ENCODE measurements at regions of chr2 and their contacts with region 1.

Region 1: DNA sequence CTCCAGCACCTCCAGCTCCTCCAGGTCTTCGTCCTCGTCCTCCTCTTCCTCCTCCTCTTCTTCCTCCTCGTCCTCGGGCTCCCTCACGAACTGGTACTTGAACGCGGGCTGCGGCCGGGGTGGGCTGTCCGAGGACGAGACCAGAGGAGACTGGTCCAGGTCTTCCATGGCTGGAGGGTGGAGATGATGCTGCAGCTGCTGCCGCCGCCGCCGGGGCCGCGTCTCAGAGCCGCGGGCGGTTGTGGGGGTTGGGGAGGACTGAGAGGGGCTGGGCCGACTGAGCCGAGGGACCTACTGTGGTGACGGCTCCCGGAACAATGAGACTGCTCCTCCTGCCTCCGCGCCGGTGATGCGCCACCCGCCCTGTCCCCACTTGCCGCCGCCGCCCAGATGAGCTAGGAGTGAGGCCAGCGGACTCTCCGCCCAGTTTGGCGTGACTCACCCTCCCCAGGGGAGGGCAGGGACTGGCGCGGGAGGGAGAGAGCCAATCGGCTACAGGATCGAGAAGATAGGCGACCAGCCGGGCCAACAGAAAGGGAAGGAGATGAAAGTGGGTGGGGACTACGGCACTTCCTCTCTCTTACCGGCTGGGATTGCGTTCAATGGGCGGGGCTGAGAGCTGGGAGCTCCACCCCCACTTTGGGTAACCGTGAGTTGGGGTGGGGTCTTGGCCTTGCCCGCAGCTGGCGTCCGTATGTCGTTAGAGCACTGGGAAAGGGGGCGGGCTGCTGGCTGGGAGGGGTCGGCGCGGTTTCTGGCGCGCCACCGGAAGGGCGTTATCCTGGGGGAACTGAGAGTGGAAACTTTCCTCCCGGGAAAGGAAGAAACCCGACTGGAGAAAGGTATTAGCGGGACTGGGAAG is at the start of gene RTN4:
- DNase-seq: peak; percentile 92 to 100 (median 95)
- ATAC-seq: peak; percentile 75
- H3K4me3 ChIP-seq: peak within 1 kb of the TSS; percentile 89
- H3K27ac ChIP-seq: peak within 1 kb of the TSS; percentile 96
- H3K4me1 ChIP-seq: peaks cover 7 to 12% of the 10 kb centered on the region in 2 experiments; a peak in 3 of 5 replicates
- H3K27me3 ChIP-seq: no peaks in the 10 kb centered on the region
- CTCF ChIP-seq: peak in 1 of 3 experiments; percentile 16; a peak in 2 of 6 replicates
- EP300 ChIP-seq: no peak
- POLR2A ChIP-seq: peak; percentile 95
- RAD21 ChIP-seq: peak in 1 of 2 experiments; percentile 14; a peak in 1 of 4 replicates
- polyA plus RNA-seq, gene RTN4: 75.8 to 90.3 TPM

Region 2: GRCh38 chr2:54455563-54456361 is 594.6 kb before region 1 on chr2 and contains the start of gene SPTBN1:
- CTCF ChIA-PET with region 1: no interaction called
- POLR2A ChIA-PET with region 1: no interaction called
- in situ Hi-C with region 1: no loop called
- intact Hi-C with region 1: no loop called
- DNase-seq: peak; percentile 17 to 61 (median 42)
- ATAC-seq: peak; percentile 72
- H3K4me3 ChIP-seq: peak within 1 kb of the TSS; percentile 19; the same call in 1 of the 2 replicates
- H3K27ac ChIP-seq: no peak within 1 kb of the TSS
- H3K4me1 ChIP-seq: peaks cover 0 to 21% of the 10 kb centered on the region in 2 experiments; a peak in 2 of 5 replicates
- H3K27me3 ChIP-seq: peaks cover 24 to 26% of the 10 kb centered on the region in 2 experiments; a peak in 4 of 5 replicates
- CTCF ChIP-seq: no peak
- EP300 ChIP-seq: no peak
- POLR2A ChIP-seq: no peak
- RAD21 ChIP-seq: no peak
- polyA plus RNA-seq, gene SPTBN1: 8.9 to 16.8 TPM

Region 3: DNA sequence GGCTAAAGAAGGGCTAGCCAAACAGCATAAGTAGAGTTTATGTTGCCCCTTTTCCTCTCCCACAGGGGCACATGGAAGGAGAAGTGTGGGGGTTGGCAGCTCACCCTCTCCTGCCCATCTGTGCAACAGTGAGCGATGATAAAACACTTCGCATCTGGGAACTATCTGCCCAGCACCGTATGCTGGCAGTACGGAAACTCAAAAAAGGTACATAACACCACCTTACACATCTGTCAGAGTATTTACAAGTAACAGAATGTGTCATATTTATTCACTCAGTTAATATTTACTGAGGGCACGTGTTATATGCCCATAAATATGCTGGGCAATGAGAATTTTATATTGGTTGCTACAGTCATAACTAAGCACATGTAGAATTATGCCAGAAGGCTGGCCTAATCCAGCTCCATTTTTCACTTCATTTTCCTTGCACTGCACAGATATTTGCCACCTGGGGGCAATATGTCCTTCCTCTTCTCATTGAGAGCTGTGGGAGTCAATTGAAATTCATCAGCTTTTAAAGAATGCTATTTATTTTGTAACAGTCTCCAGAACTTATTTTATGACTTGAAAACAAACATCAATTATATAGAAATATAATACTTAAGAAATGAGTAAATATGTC is 150.7 kb before region 1 on chr2:
- CTCF ChIA-PET with region 1: no interaction called
- POLR2A ChIA-PET with region 1: interaction called, 3 read pairs
- in situ Hi-C with region 1: no loop called
- intact Hi-C with region 1: loop called (anchors 2 kb)
- DNase-seq: peak in 2 of 4 experiments; percentile 38 to 63
- ATAC-seq: peak; percentile 87
- H3K4me3 ChIP-seq: no peak overlapping the region
- H3K27ac ChIP-seq: no peak overlapping the region
- H3K4me1 ChIP-seq: peaks cover 0 to 8% of the 10 kb centered on the region in 2 experiments; a peak in 3 of 5 replicates
- H3K27me3 ChIP-seq: peaks cover 0 to 16% of the 10 kb centered on the region in 2 experiments; a peak in 3 of 5 replicates
- CTCF ChIP-seq: peak; percentile 55 to 85 (median 68); a peak in 5 of 6 replicates
- EP300 ChIP-seq: no peak
- POLR2A ChIP-seq: no peak
- RAD21 ChIP-seq: peak; percentile 92 to 94

Region 4: GRCh38 chr2:54995553-54995952 is 54.8 kb before region 1 on chr2:
- CTCF ChIA-PET with region 1: no interaction called
- POLR2A ChIA-PET with region 1: no interaction called
- in situ Hi-C with region 1: no loop called
- intact Hi-C with region 1: no loop called
- DNase-seq: no peak
- ATAC-seq: peak; percentile 5
- H3K4me3 ChIP-seq: no peak overlapping the region
- H3K27ac ChIP-seq: no peak overlapping the region
- H3K4me1 ChIP-seq: peaks cover 2 to 22% of the 10 kb centered on the region in 2 experiments; a peak in 4 of 5 replicates
- H3K27me3 ChIP-seq: no peaks in the 10 kb centered on the region
- CTCF ChIP-seq: no peak
- EP300 ChIP-seq: no peak
- POLR2A ChIP-seq: no peak
- RAD21 ChIP-seq: no peak

Region 5: GRCh38 chr2:55099878-55100820 is 49.8 kb after region 1 on chr2:
- CTCF ChIA-PET with region 1: no interaction called
- POLR2A ChIA-PET with region 1: interaction called, 6 read pairs
- in situ Hi-C with region 1: no loop called
- intact Hi-C with region 1: loop called (anchors 5 kb)
- DNase-seq: no peak
- ATAC-seq: peak; percentile 57
- H3K4me3 ChIP-seq: no peak overlapping the region
- H3K27ac ChIP-seq: peak overlapping the region; percentile 58
- H3K4me1 ChIP-seq: peaks cover 4 to 39% of the 10 kb centered on the region in 2 experiments; a peak in 4 of 5 replicates
- H3K27me3 ChIP-seq: no peaks in the 10 kb centered on the region
- CTCF ChIP-seq: no peak
- EP300 ChIP-seq: peak; percentile 59
- POLR2A ChIP-seq: no peak
- RAD21 ChIP-seq: peak in 1 of 2 experiments; percentile 33; a peak in 2 of 4 replicates

Region 6: DNA sequence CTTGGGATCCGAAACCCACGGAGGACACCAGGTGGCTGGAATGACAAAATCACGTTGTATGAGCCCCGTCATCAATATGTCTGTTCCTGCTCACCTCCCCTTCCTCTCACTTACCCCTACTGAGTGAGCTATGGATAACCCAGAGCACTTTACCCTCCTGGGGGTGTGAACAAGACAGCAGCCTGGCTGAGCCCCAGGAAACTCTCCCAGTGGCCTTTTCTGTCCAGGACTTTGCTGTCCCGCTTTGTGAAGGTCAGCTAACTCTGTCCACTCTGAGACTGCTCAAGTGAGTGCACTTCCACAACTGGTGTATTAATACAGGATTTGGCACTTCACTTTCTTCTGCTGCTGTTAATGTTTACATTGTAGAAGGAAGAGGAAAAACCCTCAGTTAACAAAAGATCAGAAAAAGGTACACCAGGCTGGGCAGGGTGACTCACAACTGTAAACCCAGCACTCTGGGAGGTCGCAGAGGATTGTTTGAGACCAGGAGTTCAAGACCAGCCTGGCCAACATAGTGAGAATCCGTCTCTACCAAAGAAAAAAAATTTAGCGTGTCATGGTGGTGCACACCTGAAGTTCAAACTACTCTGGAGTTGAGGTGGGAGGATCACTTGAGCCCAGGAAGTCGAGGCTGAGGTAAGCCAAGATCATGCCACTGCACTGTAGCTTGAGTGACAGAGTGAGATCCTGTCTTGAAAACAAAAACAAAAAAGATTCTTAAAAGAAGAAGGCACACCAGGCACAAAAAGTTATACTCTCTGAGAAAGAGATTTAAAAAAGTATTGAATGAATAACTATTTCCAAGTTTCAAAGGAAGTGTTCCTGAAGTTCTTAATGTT is 91.4 kb after region 1 on chr2:
- CTCF ChIA-PET with region 1: no interaction called
- POLR2A ChIA-PET with region 1: interaction called, 10 read pairs
- in situ Hi-C with region 1: no loop called
- intact Hi-C with region 1: loop called (anchors 2 kb)
- DNase-seq: peak in 2 of 4 experiments; percentile 28 to 47
- ATAC-seq: peak; percentile 8
- H3K4me3 ChIP-seq: no peak overlapping the region
- H3K27ac ChIP-seq: peak overlapping the region; percentile 96
- H3K4me1 ChIP-seq: peaks cover 38 to 61% of the 10 kb centered on the region in 2 experiments
- H3K27me3 ChIP-seq: no peaks in the 10 kb centered on the region
- CTCF ChIP-seq: no peak
- EP300 ChIP-seq: no peak
- POLR2A ChIP-seq: no peak
- RAD21 ChIP-seq: 0 out of 4 replicates have a peak, but pooled peaks of 1 of the 2 experiments have one; percentile 15

Region 7: GRCh38 chr2:55175254-55176025 is 125.1 kb after region 1 on chr2:
- CTCF ChIA-PET with region 1: interaction called, 6 read pairs
- POLR2A ChIA-PET with region 1: interaction called, 14 read pairs
- in situ Hi-C with region 1: loop called (anchors 5 kb)
- intact Hi-C with region 1: no loop called
- DNase-seq: peak; percentile 65 to 67 (median 66)
- ATAC-seq: peak; percentile 93
- H3K4me3 ChIP-seq: no peak overlapping the region
- H3K27ac ChIP-seq: no peak overlapping the region
- H3K4me1 ChIP-seq: no peaks in the 10 kb centered on the region; a peak in 1 of 5 replicates
- H3K27me3 ChIP-seq: no peaks in the 10 kb centered on the region
- CTCF ChIP-seq: peak; percentile 58 to 83 (median 59); a peak in 5 of 6 replicates
- EP300 ChIP-seq: 0 out of 2 replicates have a peak, but pooled peaks have one; percentile 19
- POLR2A ChIP-seq: no peak
- RAD21 ChIP-seq: peak; percentile 91 to 94

Region 8: DNA sequence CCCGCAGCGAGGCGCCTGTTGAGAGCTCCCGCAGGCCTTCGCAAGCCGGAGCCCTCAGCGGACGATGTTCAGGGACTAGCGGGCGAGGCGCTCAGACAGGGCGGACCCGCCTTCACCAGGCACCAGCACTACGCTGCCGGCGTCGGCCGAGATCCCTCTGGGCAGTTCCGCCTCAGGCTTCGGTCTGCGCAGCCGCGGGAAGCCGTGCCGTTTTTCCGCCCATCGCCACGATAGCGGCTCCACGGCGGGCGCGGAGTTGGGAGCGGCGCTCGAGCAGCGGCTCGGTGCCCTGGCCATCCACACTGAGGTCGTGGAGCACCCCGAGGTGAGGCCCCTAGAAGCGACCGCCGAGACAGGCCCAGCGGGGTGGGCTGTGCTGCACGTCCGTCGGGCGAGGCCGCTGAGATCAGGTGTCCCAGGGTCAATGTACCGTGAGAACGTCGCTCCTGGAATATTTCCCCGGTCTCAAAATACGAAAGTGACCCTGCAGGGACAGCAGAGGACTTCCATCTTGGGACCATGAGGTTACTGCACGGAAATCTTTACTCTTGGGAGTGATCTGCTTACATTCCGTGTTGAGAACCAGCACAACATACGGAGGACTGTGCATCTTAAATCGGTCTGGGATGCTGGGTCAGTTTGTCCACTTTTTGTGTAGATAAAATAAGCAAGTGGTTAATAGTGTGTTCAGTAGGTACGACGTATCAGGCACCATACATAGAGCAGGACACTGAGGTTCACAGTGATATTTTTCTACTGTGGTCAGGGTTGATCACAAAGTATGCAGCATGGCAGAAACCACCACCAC is 231.9 kb after region 1 on chr2:
- CTCF ChIA-PET with region 1: no interaction called
- POLR2A ChIA-PET with region 1: no interaction called
- in situ Hi-C with region 1: no loop called
- intact Hi-C with region 1: no loop called
- DNase-seq: peak; percentile 78 to 91 (median 81)
- ATAC-seq: peak; percentile 95
- H3K4me3 ChIP-seq: peak overlapping the region; percentile 66
- H3K27ac ChIP-seq: peak overlapping the region; percentile 91
- H3K4me1 ChIP-seq: peaks cover 7 to 9% of the 10 kb centered on the region in 2 experiments; a peak in 3 of 5 replicates
- H3K27me3 ChIP-seq: no peaks in the 10 kb centered on the region
- CTCF ChIP-seq: no peak
- EP300 ChIP-seq: no peak
- POLR2A ChIP-seq: peak; percentile 95
- RAD21 ChIP-seq: no peak; a peak in 1 of 4 replicates

Region 9: DNA sequence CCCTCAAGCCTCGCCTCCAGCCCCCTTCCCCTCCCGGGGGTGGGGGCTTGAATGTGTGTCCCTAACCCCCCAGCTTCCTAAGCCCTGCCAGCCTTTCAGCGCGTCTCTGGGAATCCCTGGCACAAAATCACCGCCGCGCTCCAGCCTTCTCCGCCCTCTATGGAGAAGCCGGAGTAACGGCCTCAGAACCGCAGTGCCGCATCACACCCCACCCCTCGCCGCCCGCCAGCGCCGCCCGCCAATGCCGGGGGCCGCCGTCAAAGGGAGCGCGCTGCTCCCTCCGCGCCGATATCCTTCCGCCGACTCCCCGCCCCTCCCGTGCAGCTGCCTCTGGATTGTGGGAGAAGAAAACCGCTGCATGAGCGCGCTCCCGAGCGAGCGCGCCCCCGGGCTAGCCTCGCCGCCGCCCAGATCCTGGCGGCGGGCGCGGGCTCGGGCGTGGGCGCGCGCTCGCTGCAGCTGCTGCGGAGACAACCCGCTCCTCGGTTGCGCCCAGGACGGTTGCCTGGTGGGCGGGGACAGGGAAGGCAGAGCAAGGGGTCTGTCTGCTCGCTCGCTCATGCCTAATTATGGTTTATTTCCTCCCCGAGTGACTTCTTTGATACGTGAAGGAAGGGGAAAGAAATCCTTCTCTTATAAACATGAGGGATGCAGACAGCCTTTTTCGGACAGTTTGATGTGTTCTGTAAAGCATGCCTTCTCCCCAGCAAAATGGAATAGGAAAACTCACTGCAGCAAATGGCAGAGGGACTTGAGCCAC is 369.5 kb after region 1 on chr2 and contains the start of gene CCDC88A:
- CTCF ChIA-PET with region 1: no interaction called
- POLR2A ChIA-PET with region 1: no interaction called
- in situ Hi-C with region 1: no loop called
- intact Hi-C with region 1: loop called (anchors 5 kb)
- DNase-seq: peak; percentile 91 to 99 (median 92)
- ATAC-seq: peak; percentile 87
- H3K4me3 ChIP-seq: peak within 1 kb of the TSS; percentile 91
- H3K27ac ChIP-seq: peak within 1 kb of the TSS; percentile 84
- H3K4me1 ChIP-seq: peaks cover 4 to 9% of the 10 kb centered on the region in 2 experiments
- H3K27me3 ChIP-seq: no peaks in the 10 kb centered on the region; a peak in 1 of 5 replicates
- CTCF ChIP-seq: peak; percentile 13 to 27 (median 14); a peak in 1 of 6 replicates
- EP300 ChIP-seq: peak; percentile 70
- POLR2A ChIP-seq: peak; percentile 94
- RAD21 ChIP-seq: peak; percentile 36 to 38; a peak in 2 of 4 replicates
- polyA plus RNA-seq, gene CCDC88A: 29.3 to 30.3 TPM

Measured in K562 (cell line).